Left ventricle myocardium inferior (tissue), 1 donor: ENCODE measurements at regions of chr2 and their contacts with region 1.

Region 1: DNA sequence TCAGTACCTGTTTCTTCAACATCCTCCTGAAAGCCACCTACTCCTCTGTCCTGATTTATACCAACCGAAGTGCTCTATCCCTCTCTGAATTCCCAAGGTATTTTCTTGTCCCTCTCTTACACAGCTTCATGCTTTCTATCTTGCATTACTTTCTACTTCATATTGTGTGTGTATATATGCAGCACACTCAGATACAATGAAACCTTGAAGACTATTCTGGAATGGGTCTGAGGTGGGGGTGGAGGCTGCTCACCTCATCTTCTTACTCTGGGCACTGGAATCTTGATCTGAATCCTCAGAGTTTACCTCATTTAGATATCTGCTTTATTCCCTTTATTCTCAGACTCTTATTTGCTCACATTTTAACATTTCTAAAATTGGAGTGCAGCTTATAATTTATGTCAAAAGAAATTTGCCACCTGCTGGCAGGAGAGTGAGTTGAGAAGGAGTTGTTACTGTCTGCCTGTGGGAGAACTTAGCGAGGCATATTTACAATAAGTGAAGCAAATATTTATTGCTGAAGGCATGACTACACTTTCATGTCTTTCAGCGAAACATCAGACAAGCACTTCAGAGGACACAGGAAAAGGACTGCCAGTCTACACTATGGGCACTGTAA is 16.6 kb upstream of the KIAA2012 start:
- DNase-seq: no peak
- H3K4me3 ChIP-seq: no peak overlapping the region
- H3K27ac ChIP-seq: no peak overlapping the region
- H3K4me1 ChIP-seq: peaks cover 7% of the 10 kb centered on the region
- H3K27me3 ChIP-seq: peaks cover 39% of the 10 kb centered on the region
- CTCF ChIP-seq: peak; percentile 49

Region 2: GRCh38 chr2:201860636-201861066 is 195.8 kb before region 1 on chr2:
- intact Hi-C with region 1: loop called (anchors 10 kb)
- DNase-seq: no peak
- H3K4me3 ChIP-seq: no peak overlapping the region
- H3K27ac ChIP-seq: no peak overlapping the region
- H3K4me1 ChIP-seq: peaks cover 4% of the 10 kb centered on the region
- H3K27me3 ChIP-seq: peaks cover 72% of the 10 kb centered on the region
- CTCF ChIP-seq: peak; percentile 86